ENCODE measurements at regions of chr9 and their contacts with region 1.

Region 1: GRCh38 chr9:119810645-119811429 is 441.6 kb upstream of the BRINP1 start:
- DNase-seq: no peak
- ATAC-seq: peak in 5 of 8 donors; percentile 27 to 78 (median 39)
- H3K4me3 ChIP-seq: no peak overlapping the region
- H3K27ac ChIP-seq: peak overlapping the region in 3 of 10 donors; percentile 9 to 25 (median 15)
- H3K4me1 ChIP-seq: peaks cover 0 to 5% (median 0%) of the 10 kb centered on the region in 9 donors
- H3K27me3 ChIP-seq: no peaks in the 10 kb centered on the region
- CTCF ChIP-seq: no peak

Region 2: GRCh38 chr9:119877306-119877705 is 66.5 kb after region 1 on chr9:
- intact Hi-C with region 1: loop called in 1 of 10 experiments (anchors 10 kb)
- DNase-seq: no peak
- ATAC-seq: no peak
- H3K4me3 ChIP-seq: no peak overlapping the region
- H3K27ac ChIP-seq: no peak overlapping the region
- H3K4me1 ChIP-seq: no peaks in the 10 kb centered on the region
- H3K27me3 ChIP-seq: no peaks in the 10 kb centered on the region
- CTCF ChIP-seq: no peak

Region 3: GRCh38 chr9:119905724-119906123 is 94.9 kb after region 1 on chr9:
- intact Hi-C with region 1: no loop called
- DNase-seq: no peak
- ATAC-seq: no peak
- H3K4me3 ChIP-seq: no peak overlapping the region
- H3K27ac ChIP-seq: no peak overlapping the region
- H3K4me1 ChIP-seq: no peaks in the 10 kb centered on the region
- H3K27me3 ChIP-seq: peaks cover 0 to 9% (median 0%) of the 10 kb centered on the region in 7 donors
- CTCF ChIP-seq: no peak

Measured in heart right ventricle (tissue), 16 donors.